ENCODE measurements at regions of chr1 and their contacts with region 1.

Region 1: GRCh38 chr1:153670859-153671627 is at the start of gene ILF2:
- DNase-seq: peak; percentile 99
- H3K4me3 Mint-ChIP-seq: no peak within 1 kb of the TSS
- H3K27ac Mint-ChIP-seq: no peak within 1 kb of the TSS
- H3K4me1 Mint-ChIP-seq: peaks cover 31% of the 10 kb centered on the region
- H3K27me3 Mint-ChIP-seq: no peaks in the 10 kb centered on the region
- total RNA-seq, gene ILF2: 315 to 323 TPM

Region 2: GRCh38 chr1:153566440-153567379 is 104.3 kb before region 1 on chr1:
- CTCF ChIA-PET with region 1: interaction called, 3 read pairs
- POLR2A ChIA-PET with region 1: interaction called, 4 read pairs
- intact Hi-C with region 1: loop called (anchors 1 kb)
- DNase-seq: peak; percentile 95
- H3K4me3 Mint-ChIP-seq: peak overlapping the region; percentile 64
- H3K27ac Mint-ChIP-seq: peak overlapping the region; percentile 97
- H3K4me1 Mint-ChIP-seq: peaks cover 53% of the 10 kb centered on the region
- H3K27me3 Mint-ChIP-seq: peaks cover 1% of the 10 kb centered on the region

Region 3: GRCh38 chr1:153658400-153659174 is 12.5 kb before region 1 on chr1 and contains the start of gene SNAPIN:
- CTCF ChIA-PET with region 1: interaction called, 4 read pairs
- POLR2A ChIA-PET with region 1: interaction called, 16 read pairs
- intact Hi-C with region 1: loop called (anchors 1 kb)
- DNase-seq: peak; percentile 95
- H3K4me3 Mint-ChIP-seq: peak within 1 kb of the TSS; percentile 93
- H3K27ac Mint-ChIP-seq: peak within 1 kb of the TSS; percentile 82
- H3K4me1 Mint-ChIP-seq: peaks cover 17% of the 10 kb centered on the region
- H3K27me3 Mint-ChIP-seq: no peaks in the 10 kb centered on the region
- total RNA-seq, gene SNAPIN: 31.3 to 32.1 TPM

Region 4: DNA sequence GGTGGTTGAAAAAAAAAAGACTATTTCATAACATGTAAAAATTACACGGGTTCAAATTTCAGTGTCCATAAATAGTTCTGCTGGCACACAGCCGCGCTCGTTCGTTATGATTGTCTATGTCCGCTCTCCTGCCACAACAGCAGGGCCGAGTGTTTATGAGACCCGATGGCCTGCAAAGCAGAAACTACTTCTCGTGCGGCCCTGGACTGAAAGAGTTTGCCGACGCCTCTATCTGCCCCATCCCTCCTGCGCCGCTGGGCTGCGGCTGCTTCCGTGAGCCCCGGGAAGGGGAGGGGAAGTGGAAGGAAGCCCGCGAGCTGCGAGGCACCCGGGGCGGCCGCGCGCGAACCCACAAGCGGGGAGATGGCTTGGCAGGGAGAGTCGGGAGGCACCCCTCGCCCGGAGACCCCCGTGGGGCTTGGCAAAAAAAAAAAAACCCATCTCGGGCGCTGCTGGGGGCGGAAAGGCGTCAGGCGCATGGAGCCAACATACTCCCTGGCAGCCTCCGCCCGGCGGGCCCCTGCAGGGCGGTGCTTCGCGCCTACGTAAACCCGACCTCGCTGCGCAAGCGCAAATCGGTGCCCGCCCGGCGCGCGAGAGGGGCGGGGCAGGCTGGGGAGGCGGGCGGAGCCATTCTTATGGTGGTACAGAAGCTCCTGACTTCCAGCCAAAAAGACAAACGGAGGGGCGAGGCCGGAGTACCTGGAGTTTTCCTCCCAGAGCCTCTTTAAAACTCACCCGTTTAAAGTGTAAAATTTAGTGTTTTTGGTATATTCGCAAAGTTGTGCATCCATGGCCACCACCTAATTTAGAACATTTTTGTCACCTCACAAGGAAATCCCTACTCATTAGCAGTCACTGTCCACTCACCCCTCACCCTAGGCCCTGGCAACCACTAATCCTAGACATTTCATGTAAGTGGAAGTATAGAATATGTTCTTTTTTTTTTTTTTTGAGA is 112.5 kb after region 1 on chr1:
- CTCF ChIA-PET with region 1: no interaction called
- POLR2A ChIA-PET with region 1: interaction called, 4 read pairs
- intact Hi-C with region 1: loop called (anchors 1 kb)
- DNase-seq: peak; percentile 95
- H3K4me3 Mint-ChIP-seq: peak overlapping the region; percentile 83
- H3K27ac Mint-ChIP-seq: peak overlapping the region; percentile 86
- H3K4me1 Mint-ChIP-seq: peaks cover 4% of the 10 kb centered on the region
- H3K27me3 Mint-ChIP-seq: no peaks in the 10 kb centered on the region